Activated naive CD4-positive, alpha-beta T cell treated with anti-CD3 and anti-CD28 coated beads for 36 hours (primary cell): ENCODE measurements at regions of chr15 and their contacts with region 1.

Region 1: DNA sequence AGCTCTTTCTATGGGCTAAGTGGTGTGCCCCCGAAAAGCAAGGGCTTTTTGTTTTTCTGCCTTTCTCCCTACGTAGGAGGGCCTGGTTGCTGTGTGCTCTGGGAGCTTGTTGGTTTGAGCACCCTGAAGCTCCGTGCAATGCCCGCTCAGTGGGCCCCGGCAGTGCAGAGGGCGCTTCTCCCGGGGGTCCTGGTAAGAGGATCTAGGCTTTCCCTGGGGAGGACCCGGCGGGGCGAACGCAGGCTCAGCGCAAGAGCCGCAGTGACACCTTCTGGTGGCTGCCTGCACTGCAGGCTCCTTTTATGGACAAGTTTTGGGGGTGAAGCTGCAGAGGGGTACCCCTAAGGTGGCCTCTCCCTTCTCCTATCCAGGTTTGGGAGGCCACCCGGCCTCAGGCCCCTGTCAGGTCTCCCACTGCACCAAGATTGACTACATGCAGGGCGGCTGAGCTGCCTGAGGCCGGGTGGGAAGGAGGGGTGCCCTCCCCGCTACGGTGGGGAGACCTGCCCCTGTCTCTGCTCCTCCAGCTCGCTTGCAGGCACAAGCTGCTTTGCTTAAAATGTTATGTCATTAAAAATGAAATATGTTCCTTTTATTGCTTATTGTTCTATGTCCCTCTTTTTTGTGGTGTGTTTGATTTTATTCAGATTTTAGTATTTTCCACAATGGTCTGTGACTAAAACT is 387.9 kb downstream of the GABRG3 start:
- DNase-seq: no peak
- H3K4me3 Mint-ChIP-seq: no peak overlapping the region
- H3K27ac Mint-ChIP-seq: no peak overlapping the region
- H3K4me1 Mint-ChIP-seq: no peaks in the 10 kb centered on the region
- H3K27me3 Mint-ChIP-seq: no peaks in the 10 kb centered on the region

Region 2: DNA sequence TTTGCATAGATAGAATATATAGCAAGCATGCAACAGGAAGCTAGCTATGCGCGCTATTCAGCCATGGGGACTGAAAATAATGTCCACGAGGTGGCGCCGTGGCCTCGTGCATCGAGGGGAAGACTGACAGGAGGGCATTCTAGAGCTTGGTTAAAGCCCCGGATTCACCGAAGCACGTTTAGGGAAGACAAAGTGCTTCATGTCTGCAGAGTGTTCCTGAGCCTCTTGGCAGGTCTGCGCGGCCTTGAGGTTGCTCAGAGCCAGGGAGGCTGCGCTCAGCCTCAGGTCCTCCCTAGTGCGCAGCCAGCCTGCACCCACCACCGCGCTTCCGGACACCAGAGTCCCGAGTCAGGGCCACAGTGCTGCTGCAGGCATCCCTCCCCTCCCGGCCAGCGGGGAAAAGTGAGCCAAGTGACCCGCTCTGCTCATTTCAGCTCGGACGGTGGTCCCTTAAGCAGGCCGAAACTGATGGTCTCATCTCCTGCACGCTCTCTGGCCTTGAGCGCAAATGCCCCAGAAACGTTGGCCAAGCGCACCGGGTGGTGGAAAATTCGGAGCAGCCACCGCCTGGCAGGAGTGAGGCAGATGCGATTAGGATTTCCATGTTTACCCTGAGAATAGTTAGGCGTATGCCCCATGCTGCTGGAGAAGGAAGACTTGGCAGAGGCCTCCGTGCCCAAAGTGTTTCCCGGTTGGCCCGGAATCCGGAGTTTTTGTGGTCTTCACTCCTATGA is 467.3 kb before region 1 on chr15:
- CTCF ChIA-PET with region 1: interaction called, 7 read pairs
- intact Hi-C with region 1: loop called (anchors 5 kb)
- DNase-seq: peak; percentile 77
- H3K4me3 Mint-ChIP-seq: no peak overlapping the region
- H3K27ac Mint-ChIP-seq: no peak overlapping the region
- H3K4me1 Mint-ChIP-seq: peaks cover 4% of the 10 kb centered on the region
- H3K27me3 Mint-ChIP-seq: peaks cover 30% of the 10 kb centered on the region

Region 3: GRCh38 chr15:27059610-27060202 is 299.2 kb before region 1 on chr15:
- CTCF ChIA-PET with region 1: interaction called, 11 read pairs
- intact Hi-C with region 1: loop called (anchors 5 kb)
- DNase-seq: peak; percentile 49
- H3K4me3 Mint-ChIP-seq: no peak overlapping the region
- H3K27ac Mint-ChIP-seq: no peak overlapping the region
- H3K4me1 Mint-ChIP-seq: no peaks in the 10 kb centered on the region
- H3K27me3 Mint-ChIP-seq: no peaks in the 10 kb centered on the region